ENCODE measurements at regions of chr5 and their contacts with region 1.

Region 1: GRCh38 chr5:81105261-81105877 is 127.8 kb upstream of the CKMT2 start:
- DNase-seq: no peak
- H3K4me3 ChIP-seq: no peak overlapping the region
- H3K27ac ChIP-seq: no peak overlapping the region
- H3K4me1 ChIP-seq: no peaks in the 10 kb centered on the region
- H3K27me3 ChIP-seq: no peaks in the 10 kb centered on the region
- CTCF ChIP-seq: no peak
- EP300 ChIP-seq: no peak
- POLR2A ChIP-seq: no peak
- RAD21 ChIP-seq: no peak

Region 2: DNA sequence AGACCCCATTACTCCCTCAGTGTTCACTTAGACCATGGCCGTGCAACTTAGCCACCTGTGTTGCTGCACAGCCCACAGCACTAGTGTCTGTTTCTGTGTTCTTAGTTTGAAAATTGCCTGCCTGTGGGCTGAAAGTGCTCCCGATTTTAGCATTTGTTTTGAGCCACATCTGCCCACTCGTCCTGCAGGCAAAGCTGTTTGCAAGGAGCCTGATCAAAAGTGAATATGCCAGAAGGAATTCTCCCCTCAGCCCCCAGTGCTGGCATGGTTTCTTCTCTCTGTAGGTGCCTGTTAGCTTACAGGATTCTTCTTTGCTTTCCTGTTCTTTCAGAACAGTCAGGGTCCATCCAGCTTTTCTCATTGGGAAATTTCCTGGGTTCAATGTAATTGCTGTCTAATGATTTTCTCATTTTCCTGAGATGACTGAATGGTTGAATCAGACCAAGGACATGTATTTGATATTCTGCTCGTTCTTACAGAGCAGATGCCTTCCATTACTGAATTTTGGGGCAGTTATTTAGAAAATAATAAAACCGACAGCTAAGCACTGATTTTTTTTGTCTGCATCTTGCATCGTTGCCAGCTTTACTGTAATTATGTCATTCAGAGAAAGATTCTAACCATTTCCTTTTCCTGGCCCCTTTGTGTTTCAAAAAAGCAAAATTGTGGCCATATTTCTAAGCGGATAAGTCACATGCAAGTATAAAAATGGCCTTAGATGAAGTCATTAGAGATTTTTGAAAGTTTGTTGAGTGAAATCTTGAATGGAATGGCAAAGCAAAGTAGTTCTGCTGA is 16.7 kb after region 1 on chr5:
- CTCF ChIA-PET with region 1: interaction called, 21 read pairs
- POLR2A ChIA-PET with region 1: interaction called, 3 read pairs
- DNase-seq: no peak
- H3K4me3 ChIP-seq: no peak overlapping the region
- H3K27ac ChIP-seq: no peak overlapping the region
- H3K4me1 ChIP-seq: peaks cover 0 to 3% (median 0%) of the 10 kb centered on the region in 4 experiments; a peak in 2 of 7 replicates
- H3K27me3 ChIP-seq: no peaks in the 10 kb centered on the region
- CTCF ChIP-seq: no peak
- EP300 ChIP-seq: no peak
- POLR2A ChIP-seq: no peak
- RAD21 ChIP-seq: no peak

Region 3: DNA sequence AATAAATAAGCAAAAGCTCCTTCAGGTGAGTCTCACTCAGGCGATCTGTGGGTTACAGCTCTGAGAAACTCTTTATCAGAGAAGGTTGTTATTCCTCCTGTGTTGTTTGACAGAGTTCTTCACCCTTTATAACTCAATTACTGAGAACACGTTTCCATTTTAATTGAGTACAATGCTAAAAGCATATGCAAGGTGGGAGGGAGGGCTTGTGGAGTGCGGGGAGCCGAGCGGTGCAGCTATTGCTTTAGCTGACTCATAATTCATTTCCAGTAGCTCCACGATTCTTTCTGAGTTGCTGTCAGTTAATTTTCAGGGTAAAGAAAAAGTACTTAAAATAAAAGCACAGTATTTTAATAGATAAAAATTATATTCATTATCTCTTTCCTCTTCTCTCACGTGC is 23.0 kb after region 1 on chr5:
- CTCF ChIA-PET with region 1: interaction called, 21 read pairs
- POLR2A ChIA-PET with region 1: no interaction called
- DNase-seq: no peak
- H3K4me3 ChIP-seq: no peak overlapping the region
- H3K27ac ChIP-seq: no peak overlapping the region
- H3K4me1 ChIP-seq: peaks cover 0 to 5% (median 0%) of the 10 kb centered on the region in 4 experiments; a peak in 1 of 7 replicates
- H3K27me3 ChIP-seq: no peaks in the 10 kb centered on the region
- CTCF ChIP-seq: no peak
- EP300 ChIP-seq: no peak
- POLR2A ChIP-seq: no peak
- RAD21 ChIP-seq: no peak